Naive thymus-derived CD4-positive, alpha-beta T cell (primary cell): ENCODE measurements at regions of chr5 and their contacts with region 1.

Region 1: GRCh38 chr5:180868960-180869359 is 7.9 kb upstream of the ZFP62 start:
- DNase-seq: peak; percentile 9 to 63 (median 33)
- ATAC-seq: no peak
- H3K4me3 ChIP-seq: no peak overlapping the region
- H3K4me3 Mint-ChIP-seq: no peak overlapping the region
- H3K27ac ChIP-seq: no peak overlapping the region
- H3K27ac Mint-ChIP-seq: no peak overlapping the region
- H3K4me1 ChIP-seq: no peaks in the 10 kb centered on the region
- H3K4me1 Mint-ChIP-seq: peaks cover 0 to 10% (median 0%) of the 10 kb centered on the region in 7 donors
- H3K27me3 ChIP-seq: peaks cover 0 to 4% of the 10 kb centered on the region in 2 donors
- H3K27me3 Mint-ChIP-seq: peaks cover 0 to 29% (median 0%) of the 10 kb centered on the region in 5 donors

Region 2: GRCh38 chr5:179115845-179116524 is 1753.0 kb before region 1 on chr5:
- CTCF ChIA-PET with region 1: no interaction called
- POLR2A ChIA-PET with region 1: no interaction called
- intact Hi-C with region 1: no loop called
- DNase-seq: no peak
- ATAC-seq: no peak
- H3K4me3 ChIP-seq: no peak overlapping the region
- H3K4me3 Mint-ChIP-seq: no peak overlapping the region
- H3K27ac ChIP-seq: no peak overlapping the region
- H3K27ac Mint-ChIP-seq: no peak overlapping the region
- H3K4me1 ChIP-seq: no peaks in the 10 kb centered on the region
- H3K4me1 Mint-ChIP-seq: no peaks in the 10 kb centered on the region
- H3K27me3 ChIP-seq: no peaks in the 10 kb centered on the region
- H3K27me3 Mint-ChIP-seq: peaks cover 0 to 3% (median 0%) of the 10 kb centered on the region in 5 donors

Region 3: DNA sequence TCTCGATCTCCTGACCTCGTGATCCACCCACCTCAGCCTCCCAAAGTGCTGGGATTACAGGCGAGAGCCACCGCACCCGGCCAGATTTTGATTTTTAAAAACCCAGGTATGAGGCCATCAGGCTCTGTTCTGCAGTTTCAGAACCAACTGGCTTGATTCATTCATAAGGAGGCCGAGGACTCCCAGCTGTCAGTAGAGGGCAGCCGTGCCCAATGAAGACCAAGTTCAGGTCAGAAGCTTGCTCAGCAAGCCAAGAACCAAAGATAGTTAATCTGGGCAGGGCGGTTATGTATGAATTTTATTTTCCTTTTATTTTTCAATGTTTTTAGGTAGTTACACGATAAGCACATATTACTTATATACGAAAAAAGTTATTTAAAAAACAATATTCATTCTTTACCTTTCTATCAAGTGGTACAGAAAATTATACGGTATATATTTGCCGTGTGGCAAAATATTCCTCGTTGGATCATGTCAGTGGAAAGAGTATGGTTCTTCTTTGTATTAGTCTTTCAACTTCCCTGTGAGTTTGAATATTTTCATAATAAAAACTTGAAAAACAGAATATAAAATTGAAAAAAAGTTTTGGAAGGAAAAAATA is 84.4 kb before region 1 on chr5:
- CTCF ChIA-PET with region 1: interaction called, 3 read pairs
- POLR2A ChIA-PET with region 1: interaction called, 5 read pairs
- intact Hi-C with region 1: loop called (anchors 1 to 5 kb)
- DNase-seq: peak; percentile 45 to 78 (median 65)
- ATAC-seq: peak; percentile 87
- H3K4me3 ChIP-seq: no peak overlapping the region
- H3K4me3 Mint-ChIP-seq: no peak overlapping the region
- H3K27ac ChIP-seq: no peak overlapping the region
- H3K27ac Mint-ChIP-seq: peak overlapping the region in 6 of 9 donors; percentile 8 to 76 (median 33)
- H3K4me1 ChIP-seq: peaks cover 0 to 7% of the 10 kb centered on the region in 2 donors
- H3K4me1 Mint-ChIP-seq: peaks cover 23 to 58% (median 46%) of the 10 kb centered on the region in 7 donors
- H3K27me3 ChIP-seq: no peaks in the 10 kb centered on the region
- H3K27me3 Mint-ChIP-seq: no peaks in the 10 kb centered on the region

Region 4: DNA sequence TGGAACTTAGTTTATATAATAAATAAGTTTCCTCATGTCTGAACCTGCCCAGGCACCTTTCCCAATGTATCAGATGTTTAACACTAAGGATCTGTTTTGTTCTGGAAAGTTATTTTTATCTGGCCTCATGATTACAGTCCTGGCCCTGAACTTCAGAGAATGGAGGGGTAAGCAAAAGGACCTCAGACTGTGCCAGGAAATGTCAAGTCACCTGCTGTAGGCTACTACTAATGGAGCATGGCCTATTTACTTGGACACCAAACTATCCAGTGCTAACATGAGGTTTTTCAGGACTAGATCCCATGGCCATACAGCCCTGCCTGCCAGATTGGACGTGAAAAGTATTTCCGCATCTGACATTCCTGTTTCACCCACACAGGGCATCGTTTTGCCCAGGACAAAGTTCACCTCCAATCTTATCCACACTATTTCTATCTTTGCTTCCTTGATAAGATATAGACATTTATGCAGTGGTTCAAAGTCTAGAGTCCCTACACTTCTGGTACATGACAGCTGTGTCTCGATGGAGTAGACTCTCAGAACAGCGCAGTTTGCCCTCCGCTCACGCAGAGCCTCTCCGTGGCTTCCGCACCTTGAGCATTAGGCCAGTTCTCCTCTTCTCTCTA is 29.8 kb after region 1 on chr5 and contains the start of gene BTNL8:
- CTCF ChIA-PET with region 1: no interaction called
- POLR2A ChIA-PET with region 1: no interaction called
- intact Hi-C with region 1: loop called in 1 of 2 experiments (anchors 1 kb)
- DNase-seq: no peak
- ATAC-seq: no peak
- H3K4me3 ChIP-seq: no peak within 1 kb of the TSS
- H3K4me3 Mint-ChIP-seq: no peak within 1 kb of the TSS
- H3K27ac ChIP-seq: no peak within 1 kb of the TSS
- H3K27ac Mint-ChIP-seq: no peak within 1 kb of the TSS
- H3K4me1 ChIP-seq: no peaks in the 10 kb centered on the region
- H3K4me1 Mint-ChIP-seq: no peaks in the 10 kb centered on the region
- H3K27me3 ChIP-seq: no peaks in the 10 kb centered on the region
- H3K27me3 Mint-ChIP-seq: peaks cover 0 to 8% (median 0%) of the 10 kb centered on the region in 5 donors
- total RNA-seq, gene BTNL8: not detected